Activated T-helper 1 cell treated with anti-CD3 and anti-CD28 coated beads, Interleukin-12 subunit alpha, Interleukin-12 subunit beta, Interleukin-2, Interleukin-4 antibody, amounts not matched to agents 30 ng/mL and 10 ng/mL and 1 ng/mL, durations not matched to agents 14 hours and 24 hours and 36 hours (primary cell): ENCODE measurements at regions of chr7 and their contacts with region 1.

Region 1: GRCh38 chr7:155003376-155004214 is 671 bp upstream of the PAXIP1 start:
- DNase-seq: peak; percentile 78
- H3K4me3 Mint-ChIP-seq: peak overlapping the region; percentile 95
- H3K27ac Mint-ChIP-seq: peak overlapping the region; percentile 94
- H3K4me1 Mint-ChIP-seq: peaks cover 6% of the 10 kb centered on the region
- H3K27me3 Mint-ChIP-seq: peaks cover 1% of the 10 kb centered on the region

Region 2: DNA sequence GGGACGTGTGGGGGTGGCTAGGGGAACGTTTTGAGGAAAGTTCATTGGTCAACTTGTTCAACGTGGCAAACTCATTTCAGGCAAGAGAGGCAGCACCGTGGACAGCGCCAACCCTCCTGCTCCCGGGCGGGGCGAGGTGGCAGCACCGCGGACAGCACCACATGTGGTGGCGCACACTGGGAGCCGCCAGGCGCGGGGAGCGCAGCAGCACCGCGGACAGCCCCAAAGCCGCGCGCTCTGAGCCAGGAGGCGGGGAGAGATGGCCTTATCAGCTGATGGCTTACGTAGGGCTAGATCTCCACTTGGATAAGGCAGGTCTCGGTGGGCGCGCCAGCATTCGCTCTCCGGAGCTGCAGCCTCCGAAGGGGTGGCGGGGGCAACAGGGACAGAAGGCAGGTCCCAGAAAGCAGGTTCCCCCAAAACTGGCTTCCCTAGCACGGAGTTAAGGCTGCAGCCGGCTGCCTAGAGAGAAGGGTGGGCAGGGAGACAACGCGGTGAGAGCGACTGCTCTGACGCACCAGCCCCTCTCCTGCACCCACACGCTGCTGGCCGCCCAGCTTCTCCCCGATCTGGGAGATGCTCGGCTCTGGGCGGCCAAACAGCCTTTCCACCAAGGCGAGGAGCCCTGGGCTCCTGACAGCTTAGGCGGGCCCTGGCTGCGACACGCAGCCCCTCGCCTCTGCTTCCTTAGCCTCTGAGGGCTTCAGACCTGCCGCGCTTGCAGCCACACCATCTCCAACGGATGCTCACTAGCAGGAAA is 66.6 kb after region 1 on chr7 and contains the start of gene HTR5A:
- intact Hi-C with region 1: loop called (anchors 2 kb)
- DNase-seq: peak; percentile 75
- H3K4me3 Mint-ChIP-seq: no peak within 1 kb of the TSS
- H3K27ac Mint-ChIP-seq: no peak within 1 kb of the TSS
- H3K4me1 Mint-ChIP-seq: no peaks in the 10 kb centered on the region
- H3K27me3 Mint-ChIP-seq: peaks cover 14% of the 10 kb centered on the region
- total RNA-seq, gene HTR5A: not detected in 2 replicates

Region 3: GRCh38 chr7:155198901-155199845 is 195.6 kb after region 1 on chr7:
- intact Hi-C with region 1: loop called (anchors 2 kb)
- DNase-seq: peak; percentile 48
- H3K4me3 Mint-ChIP-seq: peak overlapping the region; percentile 46
- H3K27ac Mint-ChIP-seq: peak overlapping the region; percentile 83
- H3K4me1 Mint-ChIP-seq: peaks cover 24% of the 10 kb centered on the region
- H3K27me3 Mint-ChIP-seq: peaks cover 2% of the 10 kb centered on the region